Caco-2 (cell line): ENCODE measurements at regions of chr6 and their contacts with region 1.

Region 1: GRCh38 chr6:53794720-53795253 is at the start of gene LRRC1:
- DNase-seq: peak; percentile 93 to 98
- H3K4me3 ChIP-seq: peak within 1 kb of the TSS; percentile 98
- H3K4me3 Mint-ChIP-seq: peak within 1 kb of the TSS; percentile 97
- H3K27ac Mint-ChIP-seq: peak within 1 kb of the TSS; percentile 94
- H3K4me1 ChIP-seq: peaks cover 24% of the 10 kb centered on the region
- H3K4me1 Mint-ChIP-seq: peaks cover 28% of the 10 kb centered on the region
- H3K27me3 ChIP-seq: no peaks in the 10 kb centered on the region
- H3K27me3 Mint-ChIP-seq: no peaks in the 10 kb centered on the region
- CTCF ChIP-seq: no peak
- total RNA-seq, gene LRRC1: 60.8 and 66.1 TPM in 2 replicates

Region 2: GRCh38 chr6:53718597-53719460 is 76.0 kb before region 1 on chr6:
- CTCF ChIA-PET with region 1: interaction called, 32 read pairs
- POLR2A ChIA-PET with region 1: interaction called, 10 read pairs
- intact Hi-C with region 1: no loop called
- DNase-seq: peak; percentile 59 to 68
- H3K4me3 ChIP-seq: no peak overlapping the region
- H3K4me3 Mint-ChIP-seq: peak overlapping the region; percentile 28
- H3K27ac Mint-ChIP-seq: no peak overlapping the region
- H3K4me1 ChIP-seq: peaks cover 17% of the 10 kb centered on the region
- H3K4me1 Mint-ChIP-seq: peaks cover 22% of the 10 kb centered on the region
- H3K27me3 ChIP-seq: no peaks in the 10 kb centered on the region
- H3K27me3 Mint-ChIP-seq: no peaks in the 10 kb centered on the region
- CTCF ChIP-seq: peak; percentile 67 to 78

Region 3: GRCh38 chr6:53741034-53741823 is 53.6 kb before region 1 on chr6:
- CTCF ChIA-PET with region 1: interaction called, 4 read pairs
- POLR2A ChIA-PET with region 1: interaction called, 35 read pairs
- intact Hi-C with region 1: loop called (anchors 1 kb)
- DNase-seq: peak; percentile 79 to 89
- H3K4me3 ChIP-seq: peak overlapping the region; percentile 15; the same call in 1 of the 2 replicates
- H3K4me3 Mint-ChIP-seq: peak overlapping the region; percentile 64
- H3K27ac Mint-ChIP-seq: peak overlapping the region; percentile 73
- H3K4me1 ChIP-seq: peaks cover 71% of the 10 kb centered on the region
- H3K4me1 Mint-ChIP-seq: peaks cover 27% of the 10 kb centered on the region
- H3K27me3 ChIP-seq: no peaks in the 10 kb centered on the region
- H3K27me3 Mint-ChIP-seq: no peaks in the 10 kb centered on the region
- CTCF ChIP-seq: no peak

Region 4: DNA sequence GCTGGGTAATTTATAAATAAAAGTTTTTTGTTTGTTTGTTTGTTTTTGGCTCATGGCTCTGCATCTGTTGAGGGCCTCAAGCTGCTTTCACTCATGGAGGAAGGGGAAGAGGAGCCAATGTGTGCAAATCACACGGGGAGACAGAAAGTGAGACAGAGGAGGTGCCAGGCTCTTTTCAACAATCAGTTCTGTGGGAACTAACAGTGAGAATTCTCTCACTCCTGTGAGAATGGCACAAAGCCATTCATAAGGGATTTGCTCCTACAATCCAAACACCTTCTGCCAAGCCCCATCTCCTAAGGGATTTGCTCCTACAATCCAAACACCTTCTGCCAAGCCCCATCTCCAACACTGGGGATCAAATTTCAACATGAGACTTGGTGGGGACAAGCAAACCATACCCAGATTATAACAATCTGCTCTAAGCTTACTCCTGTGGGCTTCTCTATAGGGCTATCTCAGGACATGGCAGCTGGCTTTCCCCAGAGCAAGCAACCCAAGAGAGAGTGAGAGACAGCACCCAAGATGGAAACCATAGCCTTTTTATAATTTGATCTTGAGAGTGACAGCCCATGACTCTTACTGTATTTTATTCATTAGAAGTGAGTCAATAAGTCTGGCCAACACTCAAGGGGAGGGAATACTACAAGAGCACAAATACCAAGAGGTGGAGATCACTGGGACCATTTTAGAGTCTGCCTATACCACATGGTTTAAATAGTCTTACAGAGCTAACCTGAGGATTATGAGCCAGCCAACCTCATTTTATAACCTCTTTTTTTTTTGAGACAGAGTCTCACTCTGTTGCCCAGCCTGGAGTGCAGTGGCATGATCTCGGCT is 22.8 kb before region 1 on chr6:
- CTCF ChIA-PET with region 1: no interaction called
- POLR2A ChIA-PET with region 1: interaction called, 36 read pairs
- intact Hi-C with region 1: no loop called
- DNase-seq: no peak
- H3K4me3 ChIP-seq: no peak overlapping the region
- H3K4me3 Mint-ChIP-seq: no peak overlapping the region
- H3K27ac Mint-ChIP-seq: peak overlapping the region; percentile 29
- H3K4me1 ChIP-seq: peaks cover 22% of the 10 kb centered on the region
- H3K4me1 Mint-ChIP-seq: peaks cover 38% of the 10 kb centered on the region
- H3K27me3 ChIP-seq: no peaks in the 10 kb centered on the region
- H3K27me3 Mint-ChIP-seq: no peaks in the 10 kb centered on the region
- CTCF ChIP-seq: no peak

Region 5: DNA sequence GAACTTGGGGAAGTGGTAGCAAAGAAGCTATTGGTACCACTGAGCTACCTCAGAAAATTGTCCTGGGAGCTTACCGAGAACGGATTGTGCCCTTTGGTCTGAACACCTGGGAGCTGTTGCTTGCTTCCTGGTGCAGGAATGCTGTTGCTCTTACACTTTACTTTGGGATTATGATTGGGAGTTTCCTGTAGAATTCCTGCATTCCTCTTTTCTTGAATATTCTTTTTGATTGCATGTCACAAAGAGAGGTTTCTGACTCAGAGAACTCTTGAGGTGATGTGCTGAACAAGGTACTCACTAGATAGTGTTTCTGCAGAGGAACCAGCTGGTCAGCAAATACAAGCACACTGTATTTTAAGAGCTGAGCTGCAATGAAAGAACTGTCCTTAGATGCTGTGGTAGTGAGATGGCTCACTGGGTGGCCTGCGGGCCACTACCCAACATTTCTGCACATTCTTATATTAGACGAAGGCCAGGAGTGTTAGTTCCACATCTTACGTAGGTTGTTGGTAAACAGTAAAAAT is 35.0 kb after region 1 on chr6:
- CTCF ChIA-PET with region 1: no interaction called
- POLR2A ChIA-PET with region 1: interaction called, 5 read pairs
- intact Hi-C with region 1: loop called (anchors 1 kb)
- DNase-seq: peak; percentile 35 to 56
- H3K4me3 ChIP-seq: no peak overlapping the region
- H3K4me3 Mint-ChIP-seq: peak overlapping the region; percentile 52
- H3K27ac Mint-ChIP-seq: peak overlapping the region; percentile 27
- H3K4me1 ChIP-seq: peaks cover 87% of the 10 kb centered on the region
- H3K4me1 Mint-ChIP-seq: peaks cover 61% of the 10 kb centered on the region
- H3K27me3 ChIP-seq: no peaks in the 10 kb centered on the region
- H3K27me3 Mint-ChIP-seq: no peaks in the 10 kb centered on the region
- CTCF ChIP-seq: no peak

Region 6: DNA sequence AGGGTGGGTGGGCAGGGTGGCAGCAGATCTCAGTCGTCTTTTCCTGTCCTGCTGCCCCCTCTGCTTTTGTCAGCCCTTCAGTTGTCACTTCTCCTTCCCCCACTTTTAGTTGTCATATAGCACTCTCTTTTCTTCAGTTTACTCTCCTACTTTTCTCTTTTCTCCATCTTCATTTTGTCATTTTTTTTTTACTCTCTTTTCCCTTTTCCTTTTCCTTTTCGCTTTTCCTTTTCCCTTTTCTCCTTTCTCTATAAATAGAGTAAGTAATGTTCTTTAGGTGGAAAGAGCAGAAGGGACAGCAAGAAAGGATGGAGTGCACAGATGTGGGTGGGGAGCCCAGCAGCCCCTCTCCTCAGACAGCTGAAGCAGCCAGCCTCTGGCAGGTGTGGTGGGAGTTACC is 108.6 kb after region 1 on chr6:
- CTCF ChIA-PET with region 1: no interaction called
- POLR2A ChIA-PET with region 1: no interaction called
- intact Hi-C with region 1: no loop called
- DNase-seq: no peak
- H3K4me3 ChIP-seq: no peak overlapping the region
- H3K4me3 Mint-ChIP-seq: no peak overlapping the region
- H3K27ac Mint-ChIP-seq: no peak overlapping the region
- H3K4me1 ChIP-seq: no peaks in the 10 kb centered on the region
- H3K4me1 Mint-ChIP-seq: no peaks in the 10 kb centered on the region
- H3K27me3 ChIP-seq: no peaks in the 10 kb centered on the region
- H3K27me3 Mint-ChIP-seq: no peaks in the 10 kb centered on the region
- CTCF ChIP-seq: no peak

Region 7: DNA sequence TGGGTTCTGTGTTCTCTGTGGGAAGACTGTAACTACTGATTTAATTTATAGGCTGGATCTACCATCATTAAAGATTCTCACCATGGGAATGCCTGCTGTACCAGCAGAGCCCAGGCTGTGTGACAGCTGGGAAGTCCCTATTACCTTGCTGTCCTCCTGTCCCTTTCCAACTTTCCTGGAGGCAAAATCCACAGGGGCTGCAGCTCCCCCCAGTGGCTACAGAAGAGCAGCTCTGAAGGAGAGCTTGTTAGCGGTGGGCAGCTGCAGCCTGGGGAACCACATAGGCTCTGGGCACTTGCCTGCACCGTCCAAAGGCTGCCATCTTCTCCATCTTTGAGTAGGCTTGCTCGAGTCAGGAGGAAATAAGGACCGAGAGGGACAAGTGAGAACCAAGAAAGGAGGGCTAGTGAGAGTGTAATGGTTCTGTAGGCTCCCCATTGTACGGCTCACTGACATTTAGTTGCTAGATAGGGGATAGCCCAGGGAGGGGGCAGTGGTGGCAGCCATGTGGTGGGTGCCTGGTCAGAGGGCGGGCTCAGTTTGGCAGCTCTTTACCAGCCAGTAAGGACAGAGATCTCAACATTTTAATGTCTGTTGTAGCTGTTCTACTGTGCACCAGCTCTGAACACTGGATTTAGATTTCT is 161.4 kb after region 1 on chr6:
- CTCF ChIA-PET with region 1: interaction called, 30 read pairs
- POLR2A ChIA-PET with region 1: interaction called, 25 read pairs
- intact Hi-C with region 1: loop called (anchors 1 kb)
- DNase-seq: peak; percentile 77 to 83
- H3K4me3 ChIP-seq: no peak overlapping the region
- H3K4me3 Mint-ChIP-seq: no peak overlapping the region
- H3K27ac Mint-ChIP-seq: no peak overlapping the region
- H3K4me1 ChIP-seq: peaks cover 23% of the 10 kb centered on the region
- H3K4me1 Mint-ChIP-seq: peaks cover 9% of the 10 kb centered on the region
- H3K27me3 ChIP-seq: no peaks in the 10 kb centered on the region
- H3K27me3 Mint-ChIP-seq: no peaks in the 10 kb centered on the region
- CTCF ChIP-seq: peak; percentile 69 to 87